Sciatic nerve (tissue), 2 donors: ENCODE measurements at regions of chr7 and their contacts with region 1.

Region 1: DNA sequence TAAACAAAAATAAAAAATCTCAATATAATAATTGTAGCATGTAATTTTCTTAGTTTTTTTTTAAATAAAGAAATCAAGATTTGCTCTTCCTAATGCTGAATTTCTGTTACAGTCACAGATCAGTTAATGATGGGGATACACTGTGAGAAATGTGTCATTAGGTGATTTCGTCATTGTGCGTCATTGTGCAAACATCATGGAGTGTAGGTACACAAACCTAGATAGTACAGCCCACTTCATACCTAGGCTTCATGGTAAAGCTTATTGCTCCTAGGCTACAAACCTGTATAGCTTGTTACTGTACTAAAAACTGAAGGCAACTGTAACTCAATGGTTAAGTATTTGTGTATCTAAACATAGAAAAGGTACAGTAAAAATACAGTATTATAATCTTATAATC is 74.4 kb upstream of the LSM8 start:
- DNase-seq: no peak
- ATAC-seq: no peak

Region 2: DNA sequence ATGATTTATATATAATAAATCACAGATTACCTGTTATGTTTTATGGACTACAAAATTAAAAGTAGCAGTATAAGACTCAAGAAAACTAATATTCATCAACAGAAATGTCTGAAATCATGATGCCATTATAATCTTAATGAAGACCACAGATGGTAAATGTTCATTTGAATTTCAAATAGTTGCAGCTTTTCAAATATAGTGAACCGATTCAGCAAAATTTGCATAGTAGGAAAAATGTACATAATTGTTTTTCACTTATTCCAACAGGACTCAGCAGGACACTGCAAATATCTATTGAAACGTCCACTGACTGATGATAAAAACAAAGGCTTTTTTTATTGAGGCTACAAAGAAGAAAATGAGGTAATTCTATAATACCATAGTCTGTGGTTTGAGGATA is 23.2 kb after region 1 on chr7:
- intact Hi-C with region 1: loop called (anchors 2 kb)
- DNase-seq: no peak
- ATAC-seq: no peak